CD4-positive, alpha-beta memory T cell (primary cell): ENCODE measurements at regions of chr1 and their contacts with region 1.

Region 1: DNA sequence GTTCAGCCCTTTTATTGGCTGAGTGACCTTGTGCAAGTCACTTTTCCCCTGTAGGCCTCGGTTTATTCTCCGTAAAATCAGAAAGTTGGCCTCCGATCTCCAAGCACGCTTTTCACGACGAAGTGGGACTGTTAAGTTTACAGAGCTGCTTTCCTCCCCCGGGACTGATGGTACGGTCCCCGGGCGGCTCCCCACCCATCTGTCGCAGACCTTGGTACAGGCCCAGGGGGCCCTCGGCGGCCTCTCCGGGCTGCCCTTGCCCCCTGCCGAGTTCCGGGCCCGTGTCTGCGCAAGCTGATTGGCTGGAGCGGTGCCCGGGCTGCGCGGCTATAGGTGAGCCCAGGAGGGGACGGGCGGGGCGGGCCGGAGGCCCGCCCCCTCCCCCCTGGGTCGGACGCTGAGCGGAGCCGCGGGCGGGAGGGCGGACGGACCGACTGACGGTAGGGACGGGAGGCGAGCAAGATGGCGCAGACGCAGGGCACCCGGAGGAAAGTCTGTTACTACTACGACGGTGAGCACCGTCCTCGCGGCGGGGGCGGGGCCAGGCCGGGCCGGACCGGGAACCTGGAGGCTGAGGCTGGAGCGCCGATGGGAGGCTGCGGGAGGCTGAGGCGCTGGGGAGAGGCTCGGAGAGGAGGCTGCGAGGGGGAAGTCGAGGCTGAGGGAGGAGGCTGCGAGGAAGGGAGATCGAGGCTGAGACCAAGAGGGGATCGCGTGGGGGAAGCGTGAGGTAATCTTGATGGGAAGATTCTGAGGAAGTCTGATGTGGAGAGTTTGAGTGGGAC is at the start of gene HDAC1:
- DNase-seq: peak; percentile 96 to 97 (median 97)
- H3K4me3 ChIP-seq: peak within 1 kb of the TSS; percentile 83 to 93
- H3K4me3 Mint-ChIP-seq: peak within 1 kb of the TSS; percentile 97 to 100 (median 99)
- H3K27ac ChIP-seq: peak within 1 kb of the TSS; percentile 93
- H3K27ac Mint-ChIP-seq: peak within 1 kb of the TSS; percentile 94 to 99 (median 96)
- H3K4me1 ChIP-seq: peaks cover 62% of the 10 kb centered on the region
- H3K4me1 Mint-ChIP-seq: peaks cover 32 to 64% (median 47%) of the 10 kb centered on the region in 4 donors
- H3K27me3 ChIP-seq: no peaks in the 10 kb centered on the region
- H3K27me3 Mint-ChIP-seq: peaks cover 0 to 2% of the 10 kb centered on the region in 2 donors
- total RNA-seq, gene HDAC1: 174 to 190 TPM

Region 2: DNA sequence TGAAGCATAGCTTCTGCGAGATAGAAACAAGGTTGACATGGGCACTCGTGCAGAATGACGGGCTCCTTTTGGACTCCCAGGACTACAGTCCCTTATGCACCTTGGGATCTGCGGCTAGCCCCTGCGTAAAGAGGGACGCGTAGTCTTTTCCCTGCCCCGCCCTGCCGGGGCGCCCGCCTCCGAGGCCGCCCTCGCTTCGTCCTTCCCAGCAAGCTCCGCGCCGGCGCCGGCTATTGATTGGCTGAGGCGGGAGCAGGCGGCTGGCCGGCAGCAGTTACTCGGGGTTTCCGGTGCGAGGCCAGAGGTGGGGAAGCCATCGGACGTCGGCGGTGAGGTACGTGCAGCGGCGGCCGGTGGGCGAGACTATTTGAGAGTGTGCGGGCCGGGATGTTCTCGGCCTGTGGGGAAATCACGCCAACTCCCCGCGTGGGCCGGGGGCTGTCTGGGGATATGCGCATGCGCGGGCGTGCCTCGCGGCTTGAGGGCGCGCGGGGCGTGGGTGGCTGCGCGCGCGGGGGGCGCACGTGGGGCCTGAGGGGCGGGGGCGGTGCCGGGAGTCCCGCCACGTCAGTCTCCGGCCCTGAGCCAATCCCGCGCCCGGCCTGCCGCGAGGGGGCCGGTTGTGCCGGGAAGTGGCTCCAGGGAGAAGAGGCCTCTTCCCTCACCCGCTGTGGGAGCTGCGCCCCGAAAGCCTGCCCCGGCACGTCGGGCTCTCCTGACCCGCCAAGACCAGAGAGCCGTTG is 112.3 kb before region 1 on chr1 and contains the start of gene TXLNA:
- CTCF ChIA-PET with region 1: no interaction called
- POLR2A ChIA-PET with region 1: interaction called, 11 read pairs
- intact Hi-C with region 1: no loop called
- DNase-seq: peak; percentile 87 to 91 (median 88)
- H3K4me3 ChIP-seq: peak within 1 kb of the TSS; percentile 19 to 72
- H3K4me3 Mint-ChIP-seq: peak within 1 kb of the TSS; percentile 89 to 93 (median 92)
- H3K27ac ChIP-seq: peak within 1 kb of the TSS; percentile 83
- H3K27ac Mint-ChIP-seq: peak within 1 kb of the TSS; percentile 90 to 98 (median 96)
- H3K4me1 ChIP-seq: peaks cover 31% of the 10 kb centered on the region
- H3K4me1 Mint-ChIP-seq: peaks cover 24 to 53% (median 39%) of the 10 kb centered on the region in 4 donors
- H3K27me3 ChIP-seq: no peaks in the 10 kb centered on the region
- H3K27me3 Mint-ChIP-seq: no peaks in the 10 kb centered on the region
- total RNA-seq, gene TXLNA: 42.6 to 43.4 TPM

Region 3: GRCh38 chr1:32240140-32240951 is 51.6 kb before region 1 on chr1:
- CTCF ChIA-PET with region 1: interaction called, 49 read pairs
- POLR2A ChIA-PET with region 1: interaction called, 55 read pairs
- intact Hi-C with region 1: loop called (anchors 1 kb)
- DNase-seq: peak; percentile 53 to 75 (median 55)
- H3K4me3 ChIP-seq: peak overlapping the region; percentile 81
- H3K4me3 Mint-ChIP-seq: peak overlapping the region; percentile 87 to 93 (median 90)
- H3K27ac ChIP-seq: peak overlapping the region; percentile 48
- H3K27ac Mint-ChIP-seq: peak overlapping the region; percentile 68 to 88 (median 79)
- H3K4me1 ChIP-seq: peaks cover 14% of the 10 kb centered on the region
- H3K4me1 Mint-ChIP-seq: peaks cover 0 to 35% (median 15%) of the 10 kb centered on the region in 4 donors
- H3K27me3 ChIP-seq: no peaks in the 10 kb centered on the region
- H3K27me3 Mint-ChIP-seq: no peaks in the 10 kb centered on the region

Region 4: GRCh38 chr1:32273388-32274208 is 18.3 kb before region 1 on chr1:
- CTCF ChIA-PET with region 1: interaction called, 6 read pairs
- POLR2A ChIA-PET with region 1: interaction called, 24 read pairs
- intact Hi-C with region 1: loop called (anchors 1 kb)
- DNase-seq: peak; percentile 80 to 98 (median 82)
- H3K4me3 ChIP-seq: peak overlapping the region; percentile 5 to 36
- H3K4me3 Mint-ChIP-seq: peak overlapping the region; percentile 80 to 89 (median 82)
- H3K27ac ChIP-seq: peak overlapping the region; percentile 62
- H3K27ac Mint-ChIP-seq: peak overlapping the region; percentile 95 to 100 (median 97)
- H3K4me1 ChIP-seq: peaks cover 61% of the 10 kb centered on the region
- H3K4me1 Mint-ChIP-seq: peaks cover 44 to 63% (median 51%) of the 10 kb centered on the region in 4 donors
- H3K27me3 ChIP-seq: no peaks in the 10 kb centered on the region
- H3K27me3 Mint-ChIP-seq: no peaks in the 10 kb centered on the region

Region 5: DNA sequence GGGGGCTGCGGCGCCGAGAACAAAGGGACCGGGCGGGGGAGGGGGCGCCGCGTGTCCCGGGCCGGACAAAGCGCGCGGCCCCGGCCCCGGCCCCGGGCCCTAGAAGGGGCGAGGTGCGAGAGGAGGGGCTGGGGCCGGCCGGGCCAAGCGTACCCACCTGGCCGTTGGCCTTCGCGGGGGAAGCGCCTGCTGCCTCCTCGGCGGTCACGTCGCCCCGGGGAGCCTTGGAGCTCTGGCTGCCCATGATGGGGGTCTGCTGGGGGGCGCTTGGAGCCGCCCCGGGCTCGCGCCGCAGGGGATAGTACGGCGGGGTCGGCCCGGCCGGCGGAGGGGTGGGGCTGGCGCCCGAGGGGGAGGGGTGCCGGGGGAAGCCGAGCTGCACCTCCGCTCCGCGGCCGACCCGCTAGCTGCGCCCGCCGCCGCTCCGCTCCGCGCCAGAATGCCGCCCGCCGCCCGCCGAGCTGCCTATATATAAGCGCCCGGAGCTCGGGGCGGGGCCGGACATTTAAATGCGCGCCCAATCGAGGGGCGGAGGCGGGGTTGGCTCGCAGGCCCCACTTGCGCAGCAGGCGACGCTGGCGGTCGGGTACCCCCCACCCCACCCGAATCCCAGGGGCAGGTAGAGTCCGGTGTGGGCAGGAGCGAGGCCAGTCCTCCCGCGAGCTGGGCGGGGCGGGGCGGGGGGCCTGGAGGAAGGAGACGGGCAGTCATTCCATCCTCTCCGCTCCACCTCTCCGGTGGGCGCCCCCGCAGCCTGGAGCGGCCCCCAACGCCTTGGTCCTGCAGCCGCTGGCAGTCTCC is 44.1 kb after region 1 on chr1 and contains the start of gene MARCKSL1:
- CTCF ChIA-PET with region 1: interaction called, 3 read pairs
- POLR2A ChIA-PET with region 1: interaction called, 91 read pairs
- intact Hi-C with region 1: loop called (anchors 1 kb)
- DNase-seq: peak; percentile 82 to 85 (median 85)
- H3K4me3 ChIP-seq: peak within 1 kb of the TSS; percentile 29 to 48
- H3K4me3 Mint-ChIP-seq: peak within 1 kb of the TSS; percentile 83 to 92 (median 87)
- H3K27ac ChIP-seq: peak within 1 kb of the TSS; percentile 45
- H3K27ac Mint-ChIP-seq: peak within 1 kb of the TSS; percentile 31 to 95 (median 85)
- H3K4me1 ChIP-seq: peaks cover 40% of the 10 kb centered on the region
- H3K4me1 Mint-ChIP-seq: peaks cover 26 to 44% (median 34%) of the 10 kb centered on the region in 4 donors
- H3K27me3 ChIP-seq: no peaks in the 10 kb centered on the region
- H3K27me3 Mint-ChIP-seq: no peaks in the 10 kb centered on the region
- total RNA-seq, gene MARCKSL1: 46.5 to 47.3 TPM

Region 6: DNA sequence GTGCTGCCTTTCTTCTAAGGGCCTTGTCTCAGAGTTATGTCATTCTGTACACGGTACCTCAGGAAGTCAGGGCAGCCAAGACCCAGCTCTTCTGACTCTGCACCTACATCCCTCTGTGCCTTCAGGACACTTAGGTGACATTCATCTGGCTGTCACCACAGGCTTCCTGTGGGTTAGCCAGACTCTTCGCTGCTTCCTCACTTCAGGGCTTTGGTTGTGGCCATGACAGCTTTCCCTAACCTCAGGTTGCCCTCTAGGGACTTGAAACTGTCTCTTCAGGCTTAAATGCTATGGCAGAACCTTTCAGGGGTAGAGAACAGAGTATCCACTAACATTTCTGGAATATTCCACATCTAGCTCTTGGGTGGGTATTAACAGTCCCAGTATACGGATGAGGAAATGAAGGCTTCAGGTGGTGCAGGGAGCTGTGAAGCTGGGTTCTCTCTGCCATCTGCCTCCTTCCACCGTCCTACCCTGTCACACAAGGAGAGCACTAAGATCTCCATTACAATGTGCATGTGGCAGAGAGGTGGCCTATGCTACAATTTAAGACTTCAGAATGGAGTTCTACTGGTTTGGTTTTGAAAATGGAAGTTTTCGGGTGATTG is 80.4 kb after region 1 on chr1:
- CTCF ChIA-PET with region 1: no interaction called
- POLR2A ChIA-PET with region 1: interaction called, 3 read pairs
- intact Hi-C with region 1: loop called (anchors 5 kb)
- DNase-seq: peak; percentile 74 to 86 (median 77)
- H3K4me3 ChIP-seq: no peak overlapping the region
- H3K4me3 Mint-ChIP-seq: peak overlapping the region in 4 of 8 donors; percentile 5 to 36 (median 16)
- H3K27ac ChIP-seq: no peak overlapping the region
- H3K27ac Mint-ChIP-seq: peak overlapping the region in 6 of 7 donors; percentile 10 to 80 (median 47)
- H3K4me1 ChIP-seq: peaks cover 15% of the 10 kb centered on the region
- H3K4me1 Mint-ChIP-seq: peaks cover 13 to 22% (median 20%) of the 10 kb centered on the region in 4 donors
- H3K27me3 ChIP-seq: no peaks in the 10 kb centered on the region
- H3K27me3 Mint-ChIP-seq: no peaks in the 10 kb centered on the region